SK-N-SH (cell line): ENCODE measurements at regions of chr2 and their contacts with region 1.

Region 1: GRCh38 chr2:203782262-203782976 is 76.0 kb downstream of the CD28 start:
- DNase-seq: peak; percentile 71
- H3K4me3 ChIP-seq: no peak overlapping the region; a peak in 1 of 4 replicates
- H3K27ac ChIP-seq: peak overlapping the region; percentile 71 to 77; a peak in 3 of 4 replicates
- H3K4me1 ChIP-seq: peaks cover 2 to 28% of the 10 kb centered on the region in 2 experiments
- H3K27me3 ChIP-seq: no peaks in the 10 kb centered on the region
- CTCF ChIP-seq: peak; percentile 80
- EP300 ChIP-seq: no peak
- RAD21 ChIP-seq: peak; percentile 68

Region 2: DNA sequence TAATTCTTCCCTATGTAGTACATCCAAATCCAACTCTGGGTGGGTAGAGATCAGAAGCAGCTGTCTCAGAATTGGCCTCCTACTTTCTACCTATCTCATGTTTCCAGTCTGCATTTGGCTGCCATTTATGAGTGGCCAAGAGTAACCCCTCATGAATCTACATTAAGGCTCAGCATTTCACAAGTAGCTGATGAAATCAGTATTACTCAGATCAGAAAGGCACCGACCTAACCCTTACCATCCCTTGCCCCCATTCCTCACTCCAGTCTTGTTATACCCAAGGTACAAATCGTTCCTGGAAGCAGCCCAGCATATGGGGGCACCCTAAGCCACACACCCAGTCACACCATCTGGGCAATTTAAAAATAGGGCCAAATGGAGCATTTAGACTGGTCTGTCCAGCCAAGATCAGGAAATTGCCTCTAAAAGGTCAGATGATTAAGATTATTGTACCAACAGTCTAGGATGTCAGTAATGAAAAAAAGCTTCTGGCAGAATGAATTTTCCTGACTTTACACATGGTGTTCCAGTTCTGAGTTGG is 38.9 kb before region 1 on chr2:
- CTCF ChIA-PET with region 1: interaction called, 10 read pairs
- POLR2A ChIA-PET with region 1: no interaction called
- DNase-seq: no peak
- H3K4me3 ChIP-seq: no peak overlapping the region
- H3K27ac ChIP-seq: no peak overlapping the region
- H3K4me1 ChIP-seq: peaks cover 2 to 11% of the 10 kb centered on the region in 2 experiments; a peak in 2 of 4 replicates
- H3K27me3 ChIP-seq: no peaks in the 10 kb centered on the region
- CTCF ChIP-seq: no peak
- EP300 ChIP-seq: peak in 1 of 2 experiments; percentile 36; a peak in 1 of 4 replicates
- RAD21 ChIP-seq: no peak

Region 3: DNA sequence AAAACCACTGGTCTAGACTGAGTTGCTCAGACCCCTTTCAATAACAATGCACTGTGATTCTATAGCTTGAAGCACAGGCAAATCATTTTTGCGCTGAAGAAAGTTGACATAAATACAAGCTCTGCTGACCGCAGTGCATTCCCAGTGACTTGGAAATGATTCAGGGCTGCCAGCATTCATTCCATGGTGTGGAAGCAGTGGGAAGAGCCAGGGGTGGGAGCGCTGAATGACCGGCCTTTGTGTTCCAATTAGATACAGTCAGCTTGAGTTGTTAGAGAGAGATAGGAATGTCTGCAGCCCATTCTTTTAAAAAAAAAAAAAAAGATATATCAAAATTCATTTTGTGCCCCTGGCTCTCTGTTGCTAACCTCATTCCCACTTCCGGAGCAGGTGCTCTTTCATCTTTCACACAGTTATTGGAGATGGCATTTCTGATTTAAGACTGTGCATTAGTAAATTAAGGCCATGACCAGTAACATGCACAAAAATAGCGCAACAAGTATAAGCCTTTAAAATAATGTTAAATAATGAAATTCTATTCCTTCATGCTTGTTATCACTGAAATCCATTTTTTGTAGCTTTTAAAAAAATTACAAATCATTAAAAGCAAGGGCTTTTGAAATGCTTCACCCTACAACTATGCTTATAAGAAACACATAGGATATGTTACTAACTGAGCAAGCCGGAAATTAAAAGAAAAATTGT is 25.8 kb after region 1 on chr2:
- CTCF ChIA-PET with region 1: no interaction called
- POLR2A ChIA-PET with region 1: no interaction called
- DNase-seq: no peak
- H3K4me3 ChIP-seq: no peak overlapping the region
- H3K27ac ChIP-seq: peak overlapping the region; percentile 81 to 96
- H3K4me1 ChIP-seq: peaks cover 4 to 59% of the 10 kb centered on the region in 2 experiments
- H3K27me3 ChIP-seq: no peaks in the 10 kb centered on the region
- CTCF ChIP-seq: no peak
- EP300 ChIP-seq: peak; percentile 65 to 95; a peak in 3 of 4 replicates
- RAD21 ChIP-seq: no peak

Region 4: DNA sequence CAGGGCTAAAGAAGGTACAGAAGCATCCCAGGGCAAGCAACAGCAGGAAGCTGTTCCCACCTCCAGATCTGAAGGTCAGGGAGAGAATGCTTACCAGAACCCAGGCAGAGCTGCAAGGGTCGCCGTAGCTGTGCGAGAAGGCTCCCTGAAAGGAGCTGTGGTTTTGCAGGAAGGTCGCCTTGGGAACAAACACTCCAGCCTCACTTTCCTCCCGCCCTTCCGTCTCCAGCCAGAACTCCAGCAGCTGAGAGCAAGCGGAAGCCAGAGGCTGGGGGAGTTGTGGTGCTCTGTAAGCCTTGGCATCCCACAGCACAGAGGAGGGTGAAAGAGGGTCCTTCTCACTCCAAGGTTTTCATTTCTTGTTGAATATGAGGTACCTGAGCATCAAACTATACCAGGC is 135.8 kb after region 1 on chr2:
- CTCF ChIA-PET with region 1: no interaction called
- POLR2A ChIA-PET with region 1: no interaction called
- DNase-seq: no peak
- H3K4me3 ChIP-seq: no peak overlapping the region
- H3K27ac ChIP-seq: no peak overlapping the region
- H3K4me1 ChIP-seq: no peaks in the 10 kb centered on the region; a peak in 1 of 4 replicates
- H3K27me3 ChIP-seq: no peaks in the 10 kb centered on the region; the same call in 1 of the 2 replicates
- CTCF ChIP-seq: no peak
- EP300 ChIP-seq: no peak
- RAD21 ChIP-seq: no peak